A673 (cell line): ENCODE measurements at regions of chr12 and their contacts with region 1.

Region 1: DNA sequence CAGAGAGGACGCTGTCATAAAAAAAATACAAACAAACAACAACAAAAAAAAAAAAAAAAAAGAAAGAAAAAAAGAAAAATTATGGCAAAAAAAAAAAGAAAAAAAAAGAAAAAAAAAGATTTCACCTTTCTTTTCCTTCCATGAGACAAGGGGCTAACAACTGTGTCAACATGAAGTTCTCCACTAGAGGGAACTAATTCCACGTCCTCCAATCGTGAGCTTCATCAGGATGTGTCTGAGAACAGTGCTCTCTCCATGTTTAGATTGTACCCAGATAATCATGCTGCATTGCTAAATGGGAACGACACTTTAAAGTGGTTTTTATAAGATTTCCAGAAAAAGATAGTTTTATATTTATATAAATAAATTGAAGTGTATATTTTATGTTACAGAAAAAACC is 96.2 kb upstream of the PTPRB start:
- DNase-seq: peak; percentile 88
- H3K4me3 ChIP-seq: no peak overlapping the region
- H3K27ac ChIP-seq: no peak overlapping the region
- H3K4me1 ChIP-seq: peaks cover 8% of the 10 kb centered on the region
- H3K27me3 ChIP-seq: no peaks in the 10 kb centered on the region
- CTCF ChIP-seq: peak; percentile 80

Region 2: GRCh38 chr12:69779928-69780327 is 953.5 kb before region 1 on chr12:
- CTCF ChIA-PET with region 1: no interaction called
- POLR2A ChIA-PET with region 1: no interaction called
- intact Hi-C with region 1: loop called (anchors 5 kb)
- DNase-seq: peak; percentile 76
- H3K4me3 ChIP-seq: no peak overlapping the region
- H3K27ac ChIP-seq: no peak overlapping the region
- H3K4me1 ChIP-seq: no peaks in the 10 kb centered on the region
- H3K27me3 ChIP-seq: no peaks in the 10 kb centered on the region
- CTCF ChIP-seq: peak; percentile 87

Region 3: DNA sequence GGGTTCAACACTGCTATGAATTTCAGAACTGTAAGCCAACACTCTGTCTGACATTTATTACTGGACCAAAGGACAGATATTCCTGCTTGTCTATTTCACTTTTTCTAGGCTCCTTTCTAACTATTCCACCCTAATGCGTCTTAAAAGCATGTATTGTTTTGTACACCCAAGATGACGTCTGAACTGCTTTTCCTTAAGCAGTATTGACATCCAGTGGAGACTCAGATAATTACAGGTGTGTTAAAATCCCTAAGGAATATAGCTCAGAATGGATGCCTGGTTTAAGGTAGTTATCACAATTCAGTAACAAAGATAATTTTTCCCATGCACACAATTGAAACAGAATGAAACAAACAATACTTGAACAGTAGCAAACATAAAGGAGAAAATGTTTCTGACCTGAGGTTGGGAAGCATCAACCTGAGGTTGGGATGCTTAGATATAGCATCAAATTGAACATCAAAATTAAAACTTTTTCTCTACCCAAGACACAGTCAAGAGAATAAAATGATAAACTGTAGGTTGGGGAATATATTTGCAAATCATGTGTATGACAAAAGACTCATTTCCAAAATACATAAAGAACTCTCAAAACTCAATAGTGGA is 280.9 kb after region 1 on chr12:
- CTCF ChIA-PET with region 1: no interaction called
- POLR2A ChIA-PET with region 1: no interaction called
- intact Hi-C with region 1: loop called (anchors 2 kb)
- DNase-seq: peak; percentile 56
- H3K4me3 ChIP-seq: no peak overlapping the region
- H3K27ac ChIP-seq: no peak overlapping the region
- H3K4me1 ChIP-seq: peaks cover 4% of the 10 kb centered on the region
- H3K27me3 ChIP-seq: no peaks in the 10 kb centered on the region
- CTCF ChIP-seq: peak; percentile 54

Region 4: DNA sequence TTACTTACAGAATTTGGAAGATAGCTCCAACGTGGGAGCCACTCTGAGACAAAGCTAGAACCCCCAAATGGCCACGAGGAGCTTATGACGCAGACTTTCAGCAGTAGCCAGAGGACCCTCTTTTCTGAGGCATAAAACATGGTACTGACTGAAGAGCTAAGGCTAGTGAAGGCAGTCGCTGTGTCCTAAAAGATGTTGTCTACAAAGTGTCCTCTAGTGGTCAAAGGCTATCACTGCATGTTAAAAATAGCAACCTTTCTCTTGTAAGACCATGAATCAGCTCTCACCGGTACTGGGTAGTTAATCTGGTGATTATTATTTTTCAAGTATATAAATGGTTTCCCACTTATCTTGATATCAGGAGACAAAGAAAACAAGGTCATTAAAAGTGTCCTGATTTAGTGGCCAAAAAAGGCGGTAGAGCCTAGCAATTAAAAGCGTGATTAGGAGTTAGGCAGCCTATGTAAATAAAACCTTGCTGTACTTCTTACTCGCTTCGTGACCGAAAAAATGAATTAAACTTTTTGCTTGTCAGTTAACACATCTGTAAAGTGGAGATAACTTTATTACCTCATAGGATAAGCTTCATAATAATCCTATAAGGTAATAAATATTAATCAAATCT is 659.2 kb after region 1 on chr12:
- CTCF ChIA-PET with region 1: interaction called, 3 read pairs
- POLR2A ChIA-PET with region 1: no interaction called
- intact Hi-C with region 1: loop called (anchors 2 kb)
- DNase-seq: peak; percentile 87
- H3K4me3 ChIP-seq: no peak overlapping the region
- H3K27ac ChIP-seq: no peak overlapping the region
- H3K4me1 ChIP-seq: peaks cover 17% of the 10 kb centered on the region
- H3K27me3 ChIP-seq: no peaks in the 10 kb centered on the region
- CTCF ChIP-seq: peak; percentile 91

Region 5: DNA sequence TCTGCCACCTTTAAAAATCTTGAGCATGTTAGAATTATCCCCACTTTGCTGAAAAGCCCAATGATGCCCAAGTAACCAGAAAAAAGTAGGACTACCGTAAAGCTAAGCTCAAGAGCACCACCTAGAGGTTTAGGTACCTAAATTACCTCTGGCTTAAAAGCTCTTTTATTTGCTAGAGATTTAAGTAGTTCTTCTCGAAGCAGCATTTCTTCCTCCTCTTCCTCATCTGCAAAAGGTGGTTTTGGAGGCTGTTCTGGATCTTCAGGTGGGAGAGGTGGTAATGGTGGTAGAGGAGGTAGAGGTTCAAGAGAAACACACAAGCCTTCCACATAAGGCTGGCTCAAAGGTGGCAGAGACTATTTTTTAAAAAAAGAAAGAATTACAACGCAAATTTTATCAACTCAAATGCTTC is 903.3 kb after region 1 on chr12:
- CTCF ChIA-PET with region 1: interaction called, 3 read pairs
- POLR2A ChIA-PET with region 1: no interaction called
- intact Hi-C with region 1: loop called (anchors 5 kb)
- DNase-seq: peak; percentile 86
- H3K4me3 ChIP-seq: no peak overlapping the region
- H3K27ac ChIP-seq: no peak overlapping the region
- H3K4me1 ChIP-seq: peaks cover 3% of the 10 kb centered on the region
- H3K27me3 ChIP-seq: no peaks in the 10 kb centered on the region
- CTCF ChIP-seq: peak; percentile 87